A673 (cell line): ENCODE measurements at regions of chr2 and their contacts with region 1.

Region 1: DNA sequence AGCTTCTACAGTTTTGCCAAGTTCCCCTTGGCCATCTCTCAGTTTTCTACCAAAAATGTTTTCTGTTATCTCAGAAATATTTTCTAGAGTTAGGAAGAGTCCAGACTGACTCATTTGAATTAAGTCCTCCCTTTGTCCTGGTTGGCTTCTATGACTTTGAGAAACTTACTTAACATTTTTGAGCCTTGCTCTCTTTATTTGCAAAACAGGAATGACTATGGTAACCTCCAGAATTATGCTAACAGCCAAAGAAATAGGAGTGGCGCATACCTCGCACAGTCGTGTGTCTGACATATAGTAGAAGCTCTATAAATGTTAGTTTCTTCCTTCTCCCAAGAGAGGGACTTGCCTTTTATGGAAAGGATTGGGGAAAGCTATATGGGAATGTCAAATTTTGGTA is 841.1 kb downstream of the TSN start:
- DNase-seq: no peak
- H3K4me3 ChIP-seq: no peak overlapping the region
- H3K27ac ChIP-seq: no peak overlapping the region
- H3K4me1 ChIP-seq: peaks cover 5% of the 10 kb centered on the region
- H3K27me3 ChIP-seq: no peaks in the 10 kb centered on the region
- CTCF ChIP-seq: no peak

Region 2: GRCh38 chr2:122622934-122623333 is 26.3 kb after region 1 on chr2:
- CTCF ChIA-PET with region 1: no interaction called
- POLR2A ChIA-PET with region 1: interaction called, 14 read pairs
- intact Hi-C with region 1: no loop called
- DNase-seq: no peak
- H3K4me3 ChIP-seq: no peak overlapping the region
- H3K27ac ChIP-seq: no peak overlapping the region
- H3K4me1 ChIP-seq: no peaks in the 10 kb centered on the region
- H3K27me3 ChIP-seq: no peaks in the 10 kb centered on the region
- CTCF ChIP-seq: no peak